Mammary epithelial cell (primary cell): ENCODE measurements at regions of chr3 and their contacts with region 1.

Region 1: GRCh38 chr3:179432451-179432850 is 18.8 kb downstream of the GNB4 start:
- DNase-seq: no peak
- H3K4me3 ChIP-seq: no peak overlapping the region
- H3K27ac ChIP-seq: no peak overlapping the region
- H3K4me1 ChIP-seq: peaks cover 6% of the 10 kb centered on the region
- H3K27me3 ChIP-seq: no peaks in the 10 kb centered on the region
- CTCF ChIP-seq: no peak

Region 2: GRCh38 chr3:179369621-179370020 is 62.8 kb before region 1 on chr3:
- CTCF ChIA-PET with region 1: interaction called, 11 read pairs
- dilution Hi-C with region 1: no loop called
- in situ Hi-C with region 1: no loop called
- intact Hi-C with region 1: no loop called
- DNase-seq: no peak
- H3K4me3 ChIP-seq: no peak overlapping the region
- H3K27ac ChIP-seq: no peak overlapping the region
- H3K4me1 ChIP-seq: no peaks in the 10 kb centered on the region
- H3K27me3 ChIP-seq: no peaks in the 10 kb centered on the region
- CTCF ChIP-seq: no peak